Heart left ventricle (tissue), 16 donors: ENCODE measurements at regions of chr21 and their contacts with region 1.

Region 1: DNA sequence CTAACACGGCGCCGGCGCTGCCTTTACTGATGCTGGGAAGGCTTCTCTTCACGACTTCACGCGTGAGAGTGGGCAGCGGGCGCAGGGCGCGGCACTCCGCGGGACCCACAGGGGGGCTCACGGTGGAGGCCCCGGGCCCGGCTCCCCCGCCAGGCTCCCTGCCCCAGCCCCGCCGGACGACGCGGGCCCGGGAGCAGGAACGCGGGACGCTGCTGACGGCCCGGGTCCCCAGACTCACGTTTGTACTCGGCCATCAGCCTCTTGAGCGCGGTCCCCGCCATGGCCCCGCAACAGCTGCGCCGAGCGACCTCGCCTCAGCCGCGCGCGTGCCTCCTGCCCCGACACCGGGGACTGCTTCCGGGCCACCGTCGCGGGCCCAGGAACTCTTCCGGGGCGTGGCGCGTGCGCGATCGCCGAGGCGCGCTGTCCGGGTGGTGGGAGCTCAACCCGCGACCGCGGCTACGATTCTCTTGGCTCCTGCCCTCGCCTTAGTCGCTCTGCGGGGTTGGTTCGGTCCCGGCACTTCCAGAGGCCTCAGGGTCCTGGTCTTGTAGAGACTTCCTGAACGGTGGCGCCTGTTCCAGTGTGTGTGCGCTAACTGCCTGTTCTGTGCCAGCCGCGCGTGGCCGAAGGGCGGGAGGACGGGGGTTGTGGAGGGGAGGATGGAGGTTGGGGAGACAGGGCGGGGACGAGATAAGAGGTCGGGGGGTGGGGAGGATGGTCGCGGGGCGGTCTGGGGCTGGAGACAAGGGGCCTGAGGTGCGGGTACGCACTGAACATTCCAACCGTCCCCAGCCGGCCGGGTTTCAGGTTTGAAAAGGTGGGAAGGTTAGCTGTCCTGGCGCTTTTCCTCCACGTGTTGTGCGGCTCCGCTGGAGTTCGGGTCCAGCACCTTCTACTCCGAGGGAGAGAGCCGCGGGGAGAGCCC is at the start of gene UBE2G2:
- DNase-seq: peak; percentile 82 to 93 (median 86)
- ATAC-seq: peak; percentile 81 to 98 (median 96)
- H3K4me3 ChIP-seq: peak within 1 kb of the TSS; percentile 71 to 97 (median 89)
- H3K27ac ChIP-seq: peak within 1 kb of the TSS; percentile 61 to 86 (median 74)
- H3K4me1 ChIP-seq: peaks cover 0 to 35% (median 21%) of the 10 kb centered on the region in 12 donors
- H3K27me3 ChIP-seq: no peaks in the 10 kb centered on the region
- CTCF ChIP-seq: peak in 1 of 12 donors; percentile 1
- POLR2A ChIP-seq: peak in 1 of 2 donors; percentile 83
- total RNA-seq, gene UBE2G2: 57.4 to 84.4 (median 71.4) TPM

Region 2: GRCh38 chr21:44360159-44360558 is 441.6 kb before region 1 on chr21:
- intact Hi-C with region 1: no loop called
- DNase-seq: peak in 1 of 5 donors; percentile 66
- ATAC-seq: no peak
- H3K4me3 ChIP-seq: no peak overlapping the region
- H3K27ac ChIP-seq: peak overlapping the region in 1 of 12 donors; percentile 21
- H3K4me1 ChIP-seq: peaks cover 0 to 33% (median 0%) of the 10 kb centered on the region in 12 donors
- H3K27me3 ChIP-seq: peaks cover 0 to 3% (median 0%) of the 10 kb centered on the region in 9 donors
- CTCF ChIP-seq: no peak
- POLR2A ChIP-seq: no peak

Region 3: DNA sequence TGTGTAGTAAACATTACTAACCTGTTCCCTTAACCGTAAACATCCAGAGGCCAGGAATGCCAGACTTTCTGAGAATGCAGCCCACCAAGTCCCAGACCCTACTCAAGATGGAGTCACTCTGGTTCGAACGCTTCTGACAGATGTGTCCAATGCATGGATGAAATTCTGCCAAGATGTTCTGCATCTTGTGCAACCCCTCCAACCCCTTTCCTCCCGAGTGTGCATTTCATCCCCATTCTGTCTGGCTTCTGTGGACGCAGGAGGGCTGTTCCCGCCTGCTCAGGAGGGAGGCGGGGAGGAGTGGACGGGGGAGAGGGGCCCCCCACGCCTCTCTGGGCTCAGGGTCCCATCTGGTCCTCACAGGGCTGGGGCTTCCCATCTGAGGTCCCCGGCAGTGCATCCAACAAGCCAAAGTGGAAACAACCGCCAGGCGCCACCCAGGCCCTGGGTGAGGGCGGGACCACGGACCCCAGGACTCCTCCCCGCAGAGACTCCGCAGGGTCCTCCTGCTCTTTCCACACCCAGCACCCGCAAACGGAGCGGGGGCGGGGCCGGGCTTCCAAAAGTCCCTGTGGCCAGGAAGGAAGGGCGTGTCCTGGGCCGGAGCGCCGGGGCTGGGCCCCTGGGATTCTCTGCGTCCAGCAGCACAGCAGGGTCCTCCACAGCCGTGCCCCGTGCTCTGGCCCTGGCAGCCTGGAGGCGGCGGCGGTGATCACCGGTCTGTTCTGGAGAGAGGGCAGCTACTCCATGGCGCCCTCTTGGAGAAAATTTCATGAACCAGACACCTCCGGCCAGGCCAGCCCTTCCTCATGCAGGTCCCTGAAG is 43.9 kb after region 1 on chr21:
- intact Hi-C with region 1: loop called in 1 of 10 experiments (anchors 1 kb)
- DNase-seq: peak; percentile 74 to 89 (median 81)
- ATAC-seq: peak; percentile 48 to 88 (median 76)
- H3K4me3 ChIP-seq: peak overlapping the region in 10 of 12 donors; percentile 10 to 58 (median 48)
- H3K27ac ChIP-seq: peak overlapping the region in 10 of 12 donors; percentile 12 to 63 (median 46)
- H3K4me1 ChIP-seq: peaks cover 0 to 35% (median 22%) of the 10 kb centered on the region in 12 donors
- H3K27me3 ChIP-seq: no peaks in the 10 kb centered on the region
- CTCF ChIP-seq: peak in 8 of 12 donors; percentile 21 to 53 (median 40)
- POLR2A ChIP-seq: no peak

Region 4: DNA sequence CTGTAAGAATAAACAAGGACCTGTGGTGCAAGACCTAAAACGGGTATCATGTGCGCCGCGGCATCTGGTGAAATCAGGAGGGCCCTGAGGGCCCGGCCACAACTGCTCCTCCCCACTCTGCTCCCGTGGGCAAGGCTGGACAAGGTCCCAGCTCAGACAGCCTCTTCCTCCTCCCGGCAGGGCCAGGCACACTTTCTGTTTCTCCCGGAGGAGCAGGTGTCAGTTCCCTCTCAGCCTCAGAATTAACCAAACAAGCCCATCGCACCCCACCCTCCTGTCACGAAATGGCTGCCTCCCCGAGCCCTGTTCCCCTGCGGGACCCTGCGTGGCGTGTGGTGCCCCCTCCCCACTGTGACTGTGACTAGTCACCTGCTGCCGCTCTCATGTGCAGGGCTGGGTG is 56.6 kb after region 1 on chr21:
- intact Hi-C with region 1: no loop called
- DNase-seq: peak in 1 of 5 donors; percentile 60
- ATAC-seq: peak in 2 of 4 donors; percentile 40 to 59
- H3K4me3 ChIP-seq: no peak overlapping the region
- H3K27ac ChIP-seq: peak overlapping the region in 5 of 12 donors; percentile 13 to 60 (median 38)
- H3K4me1 ChIP-seq: peaks cover 4 to 64% (median 26%) of the 10 kb centered on the region in 12 donors
- H3K27me3 ChIP-seq: no peaks in the 10 kb centered on the region
- CTCF ChIP-seq: no peak
- POLR2A ChIP-seq: no peak

Region 5: DNA sequence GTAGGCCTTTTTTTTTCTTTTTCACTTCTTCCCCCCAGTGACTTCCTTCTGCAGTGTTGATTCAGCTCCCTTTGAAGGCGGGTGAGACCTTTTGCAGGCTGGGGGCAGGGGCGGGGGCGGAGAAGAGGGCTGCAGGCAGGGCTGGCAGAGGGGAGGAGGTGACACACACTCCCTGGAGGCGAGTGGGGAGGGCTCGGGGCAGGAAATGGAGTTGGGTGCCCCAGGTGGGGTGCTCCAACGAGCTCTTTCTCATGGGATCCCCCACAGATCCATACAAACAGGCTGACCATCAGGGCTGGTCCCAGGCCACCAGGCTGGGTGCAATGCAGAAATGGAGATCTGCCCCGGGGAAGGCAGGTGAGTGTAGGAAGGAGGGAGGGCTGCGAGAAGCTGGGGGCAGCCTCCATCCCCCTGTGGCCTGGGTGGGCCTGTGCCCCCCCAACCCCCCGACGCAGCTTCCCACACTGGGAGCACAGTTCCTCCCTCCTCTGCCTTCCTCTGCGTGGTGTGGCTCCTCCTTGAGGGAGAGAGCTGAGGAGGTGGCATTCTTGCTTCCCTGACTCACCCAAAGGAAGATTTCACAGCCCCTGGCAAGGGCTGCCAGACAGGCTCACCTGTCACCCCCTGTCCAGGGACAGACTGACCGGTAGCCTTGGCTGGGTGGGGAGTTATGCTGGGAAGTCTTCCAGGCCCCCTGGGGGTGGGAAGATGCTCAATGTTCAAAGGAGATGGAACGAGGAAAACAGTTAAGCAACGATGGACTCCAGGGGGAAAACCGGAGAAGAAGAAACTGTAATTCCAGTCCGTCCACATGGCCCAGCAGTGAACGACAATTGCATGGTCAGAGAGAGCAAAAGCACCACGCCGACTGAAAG is 126.1 kb after region 1 on chr21:
- intact Hi-C with region 1: loop called in 7 of 10 experiments (anchors 2 to 5 kb)
- DNase-seq: peak in 4 of 5 donors; percentile 45 to 84 (median 66)
- ATAC-seq: peak in 3 of 4 donors; percentile 15 to 63 (median 52)
- H3K4me3 ChIP-seq: peak overlapping the region in 4 of 12 donors; percentile 10 to 57 (median 29)
- H3K27ac ChIP-seq: peak overlapping the region in 3 of 12 donors; percentile 44 to 93 (median 56)
- H3K4me1 ChIP-seq: peaks cover 0 to 91% (median 22%) of the 10 kb centered on the region in 12 donors
- H3K27me3 ChIP-seq: peaks cover 2 to 37% (median 20%) of the 10 kb centered on the region in 9 donors
- CTCF ChIP-seq: no peak
- POLR2A ChIP-seq: no peak

Region 6: GRCh38 chr21:44939532-44940115 is 137.9 kb after region 1 on chr21 and contains the start of gene SLX9:
- intact Hi-C with region 1: loop called in 6 of 10 experiments (anchors 5 kb)
- DNase-seq: peak; percentile 72 to 90 (median 83)
- ATAC-seq: peak; percentile 58 to 92 (median 87)
- H3K4me3 ChIP-seq: peak within 1 kb of the TSS; percentile 74 to 99 (median 82)
- H3K27ac ChIP-seq: peak within 1 kb of the TSS; percentile 9 to 88 (median 78)
- H3K4me1 ChIP-seq: peaks cover 0 to 37% (median 29%) of the 10 kb centered on the region in 12 donors
- H3K27me3 ChIP-seq: peaks cover 0 to 5% (median 0%) of the 10 kb centered on the region in 9 donors
- CTCF ChIP-seq: no peak
- POLR2A ChIP-seq: peak in 1 of 2 donors; percentile 70
- total RNA-seq, gene SLX9: 38.5 to 53.1 (median 47.1) TPM